ENCODE measurements at regions of chr12 and their contacts with region 1.

Region 1: GRCh38 chr12:6533923-6534694 is at the start of gene GAPDH:
- DNase-seq: peak; percentile 98
- H3K4me3 Mint-ChIP-seq: peak within 1 kb of the TSS; percentile 88
- H3K27ac Mint-ChIP-seq: peak within 1 kb of the TSS; percentile 95
- H3K4me1 Mint-ChIP-seq: peaks cover 34% of the 10 kb centered on the region
- H3K27me3 Mint-ChIP-seq: no peaks in the 10 kb centered on the region
- CTCF ChIP-seq: no peak
- total RNA-seq, gene GAPDH: 2,995 and 4,097 TPM in 2 replicates

Region 2: GRCh38 chr12:5733136-5733755 is 800.9 kb before region 1 on chr12:
- CTCF ChIA-PET with region 1: no interaction called
- POLR2A ChIA-PET with region 1: no interaction called
- intact Hi-C with region 1: no loop called
- DNase-seq: peak; percentile 33
- H3K4me3 Mint-ChIP-seq: no peak overlapping the region
- H3K27ac Mint-ChIP-seq: no peak overlapping the region
- H3K4me1 Mint-ChIP-seq: no peaks in the 10 kb centered on the region
- H3K27me3 Mint-ChIP-seq: no peaks in the 10 kb centered on the region
- CTCF ChIP-seq: no peak

Region 3: GRCh38 chr12:6376079-6376869 is 157.8 kb before region 1 on chr12:
- CTCF ChIA-PET with region 1: interaction called, 8 read pairs
- POLR2A ChIA-PET with region 1: interaction called, 25 read pairs
- intact Hi-C with region 1: no loop called
- DNase-seq: peak; percentile 97
- H3K4me3 Mint-ChIP-seq: peak overlapping the region; percentile 89
- H3K27ac Mint-ChIP-seq: peak overlapping the region; percentile 97
- H3K4me1 Mint-ChIP-seq: peaks cover 56% of the 10 kb centered on the region
- H3K27me3 Mint-ChIP-seq: no peaks in the 10 kb centered on the region
- CTCF ChIP-seq: no peak

Region 4: DNA sequence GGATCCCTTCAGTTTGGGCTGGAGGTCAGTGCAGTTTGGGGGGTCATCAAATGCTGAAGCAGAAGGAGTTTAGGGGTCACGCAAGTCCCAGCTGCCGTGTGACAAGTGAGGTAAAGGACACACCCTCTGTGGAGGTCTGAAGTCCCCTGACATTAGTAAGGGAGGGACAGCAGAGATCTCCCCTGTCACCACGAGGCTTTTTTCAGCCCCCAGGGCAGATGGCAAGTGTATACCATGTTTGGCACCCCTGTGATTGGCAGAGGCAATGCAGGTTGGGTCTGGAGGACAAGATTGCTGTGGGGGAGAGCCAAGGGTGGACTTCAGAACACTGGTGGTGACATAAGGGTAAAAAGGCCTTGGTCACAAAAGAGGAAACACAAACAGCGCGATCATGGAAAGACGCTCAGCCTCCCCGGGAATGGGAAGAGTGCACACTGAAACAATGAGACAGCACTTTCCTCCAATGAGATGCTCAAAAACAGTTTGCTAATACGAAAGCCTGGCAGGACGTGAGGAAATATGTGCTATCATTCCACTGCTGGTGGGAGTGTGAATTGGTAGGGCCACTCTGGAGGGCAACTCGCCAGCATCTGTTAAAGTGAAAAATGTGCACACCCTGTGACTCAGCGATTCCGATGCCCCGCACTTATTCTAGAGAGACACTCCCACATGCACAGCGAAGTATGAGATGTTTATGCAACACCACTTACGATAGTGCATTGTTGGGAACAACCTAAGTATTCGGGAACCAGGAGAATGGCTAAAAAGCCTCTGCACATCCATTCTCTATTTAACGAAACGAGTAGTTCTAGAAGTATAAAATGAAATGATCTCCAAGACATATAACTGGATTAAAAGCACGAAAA is 103.8 kb before region 1 on chr12:
- CTCF ChIA-PET with region 1: interaction called, 99 read pairs
- POLR2A ChIA-PET with region 1: interaction called, 5 read pairs
- intact Hi-C with region 1: loop called (anchors 1 kb)
- DNase-seq: peak; percentile 99
- H3K4me3 Mint-ChIP-seq: peak overlapping the region; percentile 60
- H3K27ac Mint-ChIP-seq: peak overlapping the region; percentile 81
- H3K4me1 Mint-ChIP-seq: peaks cover 17% of the 10 kb centered on the region
- H3K27me3 Mint-ChIP-seq: no peaks in the 10 kb centered on the region
- CTCF ChIP-seq: no peak

Region 5: DNA sequence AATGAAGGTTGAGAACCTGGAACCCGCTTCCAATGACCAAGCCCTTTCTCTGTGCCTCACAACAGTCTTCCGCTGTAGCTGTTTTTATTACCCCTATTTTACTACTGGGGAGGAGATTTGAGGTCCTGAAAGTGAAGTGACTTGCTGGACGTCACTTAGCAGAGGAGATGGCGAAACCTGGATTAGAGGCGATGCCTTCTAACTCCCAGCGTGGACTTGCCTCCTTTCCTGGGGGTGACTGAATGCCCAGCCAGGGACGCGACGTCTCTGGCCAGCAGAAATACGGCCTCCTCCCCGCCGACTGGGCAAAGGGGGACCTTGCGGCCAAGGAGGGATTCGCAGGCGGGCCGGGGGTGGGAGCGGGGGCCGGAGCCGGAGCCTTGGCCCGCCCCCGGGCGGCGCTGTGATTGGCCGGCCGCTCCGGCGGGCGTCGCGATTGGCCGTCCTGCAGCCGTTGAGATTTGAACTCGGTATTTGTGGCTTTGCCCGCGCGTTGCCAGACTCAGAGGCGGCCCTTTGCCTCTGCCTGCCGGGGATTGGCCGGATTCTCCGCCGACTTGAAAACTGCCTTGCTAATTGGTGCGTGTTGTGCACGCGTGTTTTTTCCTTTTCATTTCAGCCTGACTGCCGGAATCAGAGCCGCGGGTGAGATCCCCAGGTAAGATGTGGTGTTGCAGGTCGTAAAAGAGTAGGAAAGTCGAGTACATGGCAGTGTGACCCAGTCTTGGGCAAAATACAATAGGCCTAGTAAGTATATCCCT is 40.4 kb before region 1 on chr12 and contains the start of gene NCAPD2:
- CTCF ChIA-PET with region 1: interaction called, 10 read pairs
- POLR2A ChIA-PET with region 1: interaction called, 74 read pairs
- intact Hi-C with region 1: loop called (anchors 2 kb)
- DNase-seq: peak; percentile 96
- H3K4me3 Mint-ChIP-seq: peak within 1 kb of the TSS; percentile 95
- H3K27ac Mint-ChIP-seq: peak within 1 kb of the TSS; percentile 98
- H3K4me1 Mint-ChIP-seq: peaks cover 21% of the 10 kb centered on the region
- H3K27me3 Mint-ChIP-seq: no peaks in the 10 kb centered on the region
- CTCF ChIP-seq: no peak
- total RNA-seq, gene NCAPD2: 31.9 and 52.0 TPM in 2 replicates

Region 6: DNA sequence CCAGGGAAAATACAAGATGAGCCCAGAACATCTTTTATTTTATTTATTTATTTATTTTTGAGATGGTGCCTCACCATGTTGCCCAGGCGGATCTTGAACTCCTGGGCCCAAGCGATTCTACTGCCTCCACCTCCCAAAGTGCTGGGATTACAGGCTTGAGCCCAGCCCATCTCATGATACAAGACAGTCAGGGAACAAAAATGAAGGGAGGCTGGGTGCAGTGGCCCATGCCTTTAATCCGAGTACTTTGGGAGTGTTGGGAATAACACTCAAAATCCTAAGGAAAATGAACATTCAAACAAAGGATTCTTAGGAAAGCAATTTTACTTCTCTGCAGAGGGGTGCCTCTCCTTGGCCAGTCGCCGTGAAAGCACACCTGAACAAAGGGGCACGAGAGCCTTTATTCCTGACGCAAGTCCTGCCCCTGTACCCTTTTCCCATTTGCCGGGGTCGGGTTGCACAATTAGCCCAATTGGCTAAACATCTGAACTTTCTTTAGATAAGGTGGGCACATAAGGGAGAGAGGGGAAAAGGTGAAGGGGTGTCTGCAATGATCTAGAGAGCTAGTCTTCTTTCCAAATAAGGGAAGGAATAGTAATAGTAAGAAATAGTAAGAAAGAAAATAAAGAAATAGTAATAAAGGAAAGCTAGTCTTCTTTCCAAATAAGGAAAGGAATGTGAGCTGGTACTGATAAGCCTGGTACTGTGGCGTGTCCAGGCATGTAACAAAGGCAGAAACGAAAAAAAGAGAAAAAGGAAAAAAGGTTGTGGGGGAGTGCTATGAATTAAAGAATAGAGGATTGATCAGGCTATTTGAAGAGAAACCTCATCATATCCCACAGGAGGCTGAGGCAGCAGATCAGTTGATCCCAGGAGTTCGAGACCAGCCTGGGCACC is 26.8 kb before region 1 on chr12:
- CTCF ChIA-PET with region 1: interaction called, 20 read pairs
- POLR2A ChIA-PET with region 1: interaction called, 11 read pairs
- intact Hi-C with region 1: no loop called
- DNase-seq: peak; percentile 6
- H3K4me3 Mint-ChIP-seq: peak overlapping the region; percentile 43
- H3K27ac Mint-ChIP-seq: peak overlapping the region; percentile 95
- H3K4me1 Mint-ChIP-seq: peaks cover 8% of the 10 kb centered on the region
- H3K27me3 Mint-ChIP-seq: no peaks in the 10 kb centered on the region
- CTCF ChIP-seq: no peak

Region 7: DNA sequence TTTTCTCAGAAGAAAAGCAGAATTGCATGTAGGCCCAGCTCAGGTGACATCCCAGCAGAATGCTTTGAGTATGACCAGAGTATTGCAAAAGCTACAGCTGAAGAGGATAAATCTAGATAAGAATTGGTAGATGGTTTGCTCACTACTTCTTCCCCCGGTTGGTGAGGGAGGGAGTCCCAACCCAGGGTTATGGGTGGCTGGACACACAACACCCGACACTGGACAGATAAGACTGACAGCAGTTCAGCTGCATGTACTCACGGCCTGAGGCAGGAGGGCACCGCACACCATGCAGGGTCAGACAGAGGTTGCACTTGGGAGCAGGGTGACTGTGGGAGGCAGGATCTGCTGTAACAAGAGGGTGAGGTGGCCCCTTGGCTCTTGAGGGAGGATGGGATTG is 1214.7 kb after region 1 on chr12:
- CTCF ChIA-PET with region 1: no interaction called
- POLR2A ChIA-PET with region 1: no interaction called
- intact Hi-C with region 1: no loop called
- DNase-seq: no peak
- H3K4me3 Mint-ChIP-seq: no peak overlapping the region
- H3K27ac Mint-ChIP-seq: no peak overlapping the region
- H3K4me1 Mint-ChIP-seq: no peaks in the 10 kb centered on the region
- H3K27me3 Mint-ChIP-seq: no peaks in the 10 kb centered on the region
- CTCF ChIP-seq: no peak

Measured in MCF 10A (cell line).